A673 (cell line): ENCODE measurements at regions of chr17 and their contacts with region 1.

Region 1: DNA sequence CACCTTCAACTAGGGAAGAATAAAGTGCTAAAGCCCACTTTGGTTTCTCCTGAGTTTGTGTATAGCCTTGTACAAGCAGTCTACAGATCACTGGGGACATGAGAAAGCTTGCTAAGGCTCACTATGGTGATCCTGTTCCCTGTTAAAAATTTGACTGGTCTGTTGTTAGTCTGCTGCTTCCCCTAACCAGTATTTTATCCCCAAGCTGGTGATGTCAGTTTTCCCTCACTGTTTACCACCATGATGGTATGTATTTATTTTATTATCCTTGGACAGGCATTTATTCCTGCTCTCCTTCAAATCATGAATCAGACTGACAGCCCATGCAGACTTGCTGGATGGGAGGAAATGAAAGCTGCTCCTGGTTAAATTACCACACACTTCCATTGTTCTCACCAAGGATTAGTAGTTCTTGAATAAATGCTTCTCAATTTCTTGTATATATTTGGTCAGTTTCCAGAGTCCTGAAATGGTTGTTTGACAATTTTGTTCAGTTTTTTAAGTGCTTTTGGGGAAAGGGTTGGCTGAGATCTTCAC is 99.6 kb downstream of the CA4 start:
- DNase-seq: peak; percentile 75
- H3K4me3 ChIP-seq: peak overlapping the region; percentile 18
- H3K27ac ChIP-seq: peak overlapping the region; percentile 80
- H3K4me1 ChIP-seq: peaks cover 20% of the 10 kb centered on the region
- H3K27me3 ChIP-seq: no peaks in the 10 kb centered on the region
- CTCF ChIP-seq: no peak

Region 2: GRCh38 chr17:60392042-60392844 is 142.9 kb after region 1 on chr17 and contains the start of gene USP32:
- CTCF ChIA-PET with region 1: no interaction called
- POLR2A ChIA-PET with region 1: no interaction called
- intact Hi-C with region 1: loop called (anchors 1 kb)
- DNase-seq: peak; percentile 98
- H3K4me3 ChIP-seq: peak within 1 kb of the TSS; percentile 89
- H3K27ac ChIP-seq: peak within 1 kb of the TSS; percentile 89
- H3K4me1 ChIP-seq: peaks cover 54% of the 10 kb centered on the region
- H3K27me3 ChIP-seq: no peaks in the 10 kb centered on the region
- CTCF ChIP-seq: no peak
- total RNA-seq, gene USP32: 49.3 and 54.8 TPM in 2 replicates